CD14-positive monocyte (primary cell): ENCODE measurements at regions of chr14 and their contacts with region 1.

Region 1: DNA sequence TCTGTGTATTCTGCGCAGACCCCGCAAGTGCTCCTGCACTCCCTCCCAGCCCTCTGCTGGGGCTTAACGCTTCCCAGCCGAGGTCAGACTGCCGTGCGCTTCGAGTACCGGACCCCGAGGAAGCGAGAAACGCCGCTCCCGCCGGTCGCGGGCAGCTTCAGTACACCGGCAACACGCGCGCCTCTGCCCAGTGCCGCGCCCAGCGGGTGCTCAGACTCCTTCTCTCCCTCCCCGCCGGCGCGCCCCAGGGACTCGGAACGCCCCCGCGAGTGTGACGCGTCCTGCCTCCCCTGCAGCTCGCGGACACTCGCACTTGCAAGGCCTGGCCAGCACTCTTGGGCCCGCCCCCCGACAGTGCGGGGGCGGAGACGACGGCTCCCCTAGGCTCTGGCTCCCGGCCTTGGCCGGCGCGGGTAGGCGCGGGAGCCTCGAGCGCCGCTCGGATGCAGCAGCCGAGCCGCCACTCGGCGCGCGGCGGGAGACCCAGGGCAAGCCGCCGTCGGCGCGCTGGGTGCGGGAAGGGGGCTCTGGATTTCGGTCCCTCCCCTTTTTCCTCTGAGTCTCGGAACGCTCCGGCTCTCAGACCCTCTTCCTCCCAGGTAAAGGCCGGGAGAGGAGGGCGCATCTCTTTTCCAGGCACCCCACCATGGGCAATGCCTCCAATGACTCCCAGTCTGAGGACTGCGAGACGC is at the start of gene PTGER2:
- DNase-seq: peak; percentile 90 to 96 (median 95)
- H3K4me3 ChIP-seq: peak within 1 kb of the TSS; percentile 62 to 85 (median 85)
- H3K4me3 Mint-ChIP-seq: peak within 1 kb of the TSS; percentile 99 to 100
- H3K27ac ChIP-seq: peak within 1 kb of the TSS; percentile 87 to 97
- H3K27ac Mint-ChIP-seq: peak within 1 kb of the TSS; percentile 99 to 100 (median 99)
- H3K4me1 ChIP-seq: peaks cover 79 to 83% of the 10 kb centered on the region in 2 donors
- H3K4me1 Mint-ChIP-seq: peaks cover 79% of the 10 kb centered on the region
- H3K27me3 ChIP-seq: no peaks in the 10 kb centered on the region
- H3K27me3 Mint-ChIP-seq: peaks cover 0 to 5% (median 2%) of the 10 kb centered on the region in 3 donors
- CTCF ChIP-seq: no peak
- polyA plus RNA-seq, gene PTGER2: 51.5 to 90.4 (median 72.8) TPM

Region 2: DNA sequence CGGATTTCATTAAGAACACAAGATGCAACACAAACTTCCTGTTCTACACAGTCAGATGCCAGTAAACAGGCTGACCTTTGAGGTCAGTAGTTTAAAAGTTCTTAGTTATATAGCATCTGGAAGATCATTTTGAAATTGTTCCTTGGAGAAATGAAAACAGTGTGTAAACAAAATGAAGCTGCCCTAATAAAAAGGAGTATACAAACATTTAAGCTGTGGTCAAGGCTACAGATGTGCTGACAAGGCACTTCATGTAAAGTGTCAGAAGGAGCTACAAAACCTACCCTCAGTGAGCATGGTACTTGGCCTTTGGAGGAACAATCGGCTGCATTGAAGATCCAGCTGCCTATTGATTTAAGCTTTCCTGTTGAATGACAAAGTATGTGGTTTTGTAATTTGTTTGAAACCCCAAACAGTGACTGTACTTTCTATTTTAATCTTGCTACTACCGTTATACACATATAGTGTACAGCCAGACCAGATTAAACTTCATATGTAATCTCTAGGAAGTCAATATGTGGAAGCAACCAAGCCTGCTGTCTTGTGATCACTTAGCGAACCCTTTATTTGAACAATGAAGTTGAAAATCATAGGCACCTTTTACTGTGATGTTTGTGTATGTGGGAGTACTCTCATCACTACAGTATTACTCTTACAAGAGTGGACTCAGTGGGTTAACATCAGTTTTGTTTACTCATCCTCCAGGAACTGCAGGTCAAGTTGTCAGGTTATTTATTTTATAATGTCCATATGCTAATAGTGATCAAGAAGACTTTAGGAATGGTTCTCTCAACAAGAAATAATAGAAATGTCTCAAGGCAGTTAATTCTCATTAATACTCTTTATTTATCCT is 13.6 kb after region 1 on chr14:
- intact Hi-C with region 1: loop called in 1 of 2 experiments (anchors 2 kb)
- DNase-seq: peak; percentile 76 to 85 (median 79)
- H3K4me3 ChIP-seq: peak overlapping the region in 1 of 3 experiments; percentile 1
- H3K4me3 Mint-ChIP-seq: peak overlapping the region; percentile 31 to 54
- H3K27ac ChIP-seq: peak overlapping the region; percentile 25 to 83
- H3K27ac Mint-ChIP-seq: peak overlapping the region; percentile 89 to 99 (median 95)
- H3K4me1 ChIP-seq: peaks cover 45 to 49% of the 10 kb centered on the region in 2 donors
- H3K4me1 Mint-ChIP-seq: peaks cover 49% of the 10 kb centered on the region
- H3K27me3 ChIP-seq: no peaks in the 10 kb centered on the region
- H3K27me3 Mint-ChIP-seq: peaks cover 0 to 1% (median 1%) of the 10 kb centered on the region in 3 donors
- CTCF ChIP-seq: no peak

Region 3: DNA sequence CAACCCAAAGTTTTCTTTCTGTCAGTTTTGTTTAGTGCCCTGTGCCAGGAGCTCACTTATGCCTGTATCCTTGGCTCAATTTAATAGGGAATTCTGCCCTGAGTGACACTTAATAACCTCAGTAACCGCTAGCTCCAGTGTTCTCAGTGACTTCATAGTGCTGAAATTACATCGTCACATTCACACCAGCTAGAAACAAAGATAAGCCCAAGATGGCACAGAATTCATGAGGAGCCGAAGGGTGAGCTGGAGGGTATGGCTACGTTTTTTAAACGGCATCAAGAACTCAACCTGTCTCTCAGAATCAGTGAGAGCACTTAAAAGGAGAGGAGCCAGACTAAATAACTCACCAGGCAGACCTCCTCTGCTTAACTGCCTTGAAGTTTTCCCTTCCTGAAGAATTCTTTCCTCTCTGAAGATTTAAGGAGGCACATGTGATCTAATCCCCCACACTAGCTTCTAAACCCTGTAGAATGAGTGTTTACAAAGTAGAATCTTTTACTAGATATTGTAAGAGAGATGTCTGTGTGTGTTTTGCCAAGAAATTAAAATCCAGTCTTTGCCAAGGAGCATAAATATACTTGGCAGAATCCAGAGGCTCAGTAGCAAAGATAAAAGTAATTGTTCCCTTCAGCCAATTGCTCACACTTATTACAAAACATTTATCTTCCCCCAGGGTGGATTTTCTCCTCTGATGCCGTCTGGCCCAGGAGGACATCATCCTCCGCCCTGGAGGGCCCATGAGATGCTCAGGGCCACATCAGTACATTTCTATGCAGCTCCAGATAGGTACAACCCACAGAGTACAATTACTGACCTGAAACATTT is 37.4 kb after region 1 on chr14:
- intact Hi-C with region 1: loop called (anchors 5 to 10 kb)
- DNase-seq: no peak
- H3K4me3 ChIP-seq: no peak overlapping the region
- H3K4me3 Mint-ChIP-seq: peak overlapping the region in 1 of 2 donors; percentile 61
- H3K27ac ChIP-seq: no peak overlapping the region
- H3K27ac Mint-ChIP-seq: no peak overlapping the region
- H3K4me1 ChIP-seq: peaks cover 8 to 12% of the 10 kb centered on the region in 2 donors
- H3K4me1 Mint-ChIP-seq: peaks cover 14% of the 10 kb centered on the region
- H3K27me3 ChIP-seq: peaks cover 92 to 99% of the 10 kb centered on the region in 2 donors
- H3K27me3 Mint-ChIP-seq: peaks cover 83 to 92% (median 90%) of the 10 kb centered on the region in 3 donors
- CTCF ChIP-seq: no peak

Region 4: GRCh38 chr14:52402812-52403526 is 88.9 kb after region 1 on chr14:
- intact Hi-C with region 1: loop called in 1 of 2 experiments (anchors 5 kb)
- DNase-seq: peak; percentile 35 to 48 (median 42)
- H3K4me3 ChIP-seq: no peak overlapping the region
- H3K4me3 Mint-ChIP-seq: peak overlapping the region in 1 of 2 donors; percentile 77
- H3K27ac ChIP-seq: no peak overlapping the region
- H3K27ac Mint-ChIP-seq: peak overlapping the region in 1 of 7 donors; percentile 20
- H3K4me1 ChIP-seq: peaks cover 32% of the 10 kb centered on the region in 2 donors
- H3K4me1 Mint-ChIP-seq: peaks cover 35% of the 10 kb centered on the region
- H3K27me3 ChIP-seq: peaks cover 63 to 70% of the 10 kb centered on the region in 2 donors
- H3K27me3 Mint-ChIP-seq: peaks cover 53 to 76% (median 60%) of the 10 kb centered on the region in 3 donors
- CTCF ChIP-seq: no peak

Region 5: DNA sequence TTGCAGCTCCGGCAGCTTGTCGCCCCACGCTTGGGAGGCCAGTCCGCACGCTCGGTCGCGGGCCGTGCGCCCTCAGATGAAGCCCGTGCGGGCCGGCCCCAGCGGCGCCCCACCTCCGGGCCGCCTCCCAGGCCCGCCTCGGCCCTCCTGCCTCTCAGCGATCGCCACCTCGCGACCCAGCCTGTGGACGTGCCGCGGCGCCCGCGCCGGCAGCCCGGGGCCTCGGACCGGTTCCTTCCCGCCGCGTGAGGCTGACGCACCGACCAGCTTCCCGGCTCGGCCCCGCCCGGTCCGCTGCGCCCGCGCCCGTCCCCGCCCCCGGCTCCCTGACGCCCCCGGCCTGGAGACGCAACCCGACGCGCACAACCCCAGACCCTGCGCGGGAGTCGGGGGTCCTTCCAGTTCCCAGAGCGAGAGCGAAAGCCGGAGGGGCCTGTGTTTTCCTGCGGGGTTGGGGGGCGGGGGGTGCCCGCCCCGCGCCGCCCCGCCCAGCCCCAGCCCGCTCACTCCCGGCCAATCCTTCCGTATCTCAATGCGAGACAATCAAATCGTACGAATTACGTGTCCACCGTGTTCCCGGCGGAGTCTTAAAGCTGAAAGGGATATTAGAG is 381.5 kb after region 1 on chr14 and contains the start of gene ERO1A:
- intact Hi-C with region 1: loop called in 1 of 2 experiments (anchors 10 kb)
- DNase-seq: peak; percentile 76 to 82 (median 76)
- H3K4me3 ChIP-seq: peak within 1 kb of the TSS; percentile 64 to 96 (median 91)
- H3K4me3 Mint-ChIP-seq: peak within 1 kb of the TSS; percentile 94 to 96
- H3K27ac ChIP-seq: peak within 1 kb of the TSS; percentile 80 to 97
- H3K27ac Mint-ChIP-seq: peak within 1 kb of the TSS; percentile 93 to 98 (median 94)
- H3K4me1 ChIP-seq: peaks cover 49 to 62% of the 10 kb centered on the region in 2 donors
- H3K4me1 Mint-ChIP-seq: peaks cover 62% of the 10 kb centered on the region
- H3K27me3 ChIP-seq: no peaks in the 10 kb centered on the region
- H3K27me3 Mint-ChIP-seq: peaks cover 0 to 1% (median 1%) of the 10 kb centered on the region in 3 donors
- CTCF ChIP-seq: no peak
- polyA plus RNA-seq, gene ERO1A: 22.1 to 39.5 (median 29.2) TPM